Activated CD8-positive, alpha-beta T cell treated with anti-CD3 and anti-CD28 coated beads for 36 hours (primary cell): ENCODE measurements at regions of chr5 and their contacts with region 1.

Region 1: GRCh38 chr5:160508780-160509361 is 87.2 kb downstream of the PTTG1 start:
- DNase-seq: peak; percentile 69
- ATAC-seq: peak; percentile 88
- H3K4me3 Mint-ChIP-seq: no peak overlapping the region
- H3K27ac Mint-ChIP-seq: peak overlapping the region; percentile 53
- H3K4me1 Mint-ChIP-seq: peaks cover 33% of the 10 kb centered on the region
- H3K27me3 Mint-ChIP-seq: peaks cover 1% of the 10 kb centered on the region
- CTCF ChIP-seq: peak; percentile 73

Region 2: GRCh38 chr5:160467555-160468362 is 41.1 kb before region 1 on chr5:
- CTCF ChIA-PET with region 1: interaction called, 6 read pairs
- POLR2A ChIA-PET with region 1: interaction called, 5 read pairs
- intact Hi-C with region 1: loop called (anchors 5 kb)
- DNase-seq: peak; percentile 96
- ATAC-seq: peak; percentile 86
- H3K4me3 Mint-ChIP-seq: peak overlapping the region; percentile 100
- H3K27ac Mint-ChIP-seq: peak overlapping the region; percentile 100
- H3K4me1 Mint-ChIP-seq: peaks cover 67% of the 10 kb centered on the region
- H3K27me3 Mint-ChIP-seq: no peaks in the 10 kb centered on the region
- CTCF ChIP-seq: no peak

Region 3: GRCh38 chr5:160787240-160787639 is 278.4 kb after region 1 on chr5:
- CTCF ChIA-PET with region 1: interaction called, 4 read pairs
- POLR2A ChIA-PET with region 1: no interaction called
- intact Hi-C with region 1: loop called (anchors 5 kb)
- DNase-seq: peak; percentile 37
- ATAC-seq: no peak
- H3K4me3 Mint-ChIP-seq: no peak overlapping the region
- H3K27ac Mint-ChIP-seq: no peak overlapping the region
- H3K4me1 Mint-ChIP-seq: no peaks in the 10 kb centered on the region
- H3K27me3 Mint-ChIP-seq: no peaks in the 10 kb centered on the region
- CTCF ChIP-seq: no peak

Region 4: GRCh38 chr5:160905285-160905684 is 396.4 kb after region 1 on chr5:
- CTCF ChIA-PET with region 1: no interaction called
- POLR2A ChIA-PET with region 1: no interaction called
- intact Hi-C with region 1: no loop called
- DNase-seq: no peak
- ATAC-seq: no peak
- H3K4me3 Mint-ChIP-seq: no peak overlapping the region
- H3K27ac Mint-ChIP-seq: no peak overlapping the region
- H3K4me1 Mint-ChIP-seq: no peaks in the 10 kb centered on the region
- H3K27me3 Mint-ChIP-seq: peaks cover 1% of the 10 kb centered on the region
- CTCF ChIP-seq: no peak